Caco-2 (cell line): ENCODE measurements at regions of chr12 and their contacts with region 1.

Region 1: GRCh38 chr12:4441355-4442335 is 4.0 kb downstream of the FGF6 start:
- DNase-seq: peak in 1 of 2 experiments; percentile 32
- H3K4me3 ChIP-seq: no peak overlapping the region
- H3K4me3 Mint-ChIP-seq: no peak overlapping the region
- H3K27ac Mint-ChIP-seq: no peak overlapping the region
- H3K4me1 ChIP-seq: no peaks in the 10 kb centered on the region
- H3K4me1 Mint-ChIP-seq: no peaks in the 10 kb centered on the region
- H3K27me3 ChIP-seq: peaks cover 4% of the 10 kb centered on the region; the same call in 1 of the 2 replicates
- H3K27me3 Mint-ChIP-seq: peaks cover 44% of the 10 kb centered on the region
- CTCF ChIP-seq: no peak

Region 2: GRCh38 chr12:3084742-3085141 is 1356.9 kb before region 1 on chr12:
- CTCF ChIA-PET with region 1: no interaction called
- POLR2A ChIA-PET with region 1: interaction called, 12 read pairs
- intact Hi-C with region 1: no loop called
- DNase-seq: no peak
- H3K4me3 ChIP-seq: no peak overlapping the region
- H3K4me3 Mint-ChIP-seq: no peak overlapping the region
- H3K27ac Mint-ChIP-seq: peak overlapping the region; percentile 74
- H3K4me1 ChIP-seq: peaks cover 67% of the 10 kb centered on the region
- H3K4me1 Mint-ChIP-seq: peaks cover 46% of the 10 kb centered on the region
- H3K27me3 ChIP-seq: no peaks in the 10 kb centered on the region
- H3K27me3 Mint-ChIP-seq: no peaks in the 10 kb centered on the region
- CTCF ChIP-seq: no peak

Region 3: GRCh38 chr12:4780641-4781625 is 339.3 kb after region 1 on chr12:
- CTCF ChIA-PET with region 1: no interaction called
- POLR2A ChIA-PET with region 1: no interaction called
- intact Hi-C with region 1: no loop called
- DNase-seq: no peak
- H3K4me3 ChIP-seq: no peak overlapping the region
- H3K4me3 Mint-ChIP-seq: no peak overlapping the region
- H3K27ac Mint-ChIP-seq: no peak overlapping the region
- H3K4me1 ChIP-seq: no peaks in the 10 kb centered on the region
- H3K4me1 Mint-ChIP-seq: no peaks in the 10 kb centered on the region
- H3K27me3 ChIP-seq: no peaks in the 10 kb centered on the region
- H3K27me3 Mint-ChIP-seq: peaks cover 25% of the 10 kb centered on the region
- CTCF ChIP-seq: no peak